ENCODE measurements at regions of chr1 and their contacts with region 1.

Region 1: DNA sequence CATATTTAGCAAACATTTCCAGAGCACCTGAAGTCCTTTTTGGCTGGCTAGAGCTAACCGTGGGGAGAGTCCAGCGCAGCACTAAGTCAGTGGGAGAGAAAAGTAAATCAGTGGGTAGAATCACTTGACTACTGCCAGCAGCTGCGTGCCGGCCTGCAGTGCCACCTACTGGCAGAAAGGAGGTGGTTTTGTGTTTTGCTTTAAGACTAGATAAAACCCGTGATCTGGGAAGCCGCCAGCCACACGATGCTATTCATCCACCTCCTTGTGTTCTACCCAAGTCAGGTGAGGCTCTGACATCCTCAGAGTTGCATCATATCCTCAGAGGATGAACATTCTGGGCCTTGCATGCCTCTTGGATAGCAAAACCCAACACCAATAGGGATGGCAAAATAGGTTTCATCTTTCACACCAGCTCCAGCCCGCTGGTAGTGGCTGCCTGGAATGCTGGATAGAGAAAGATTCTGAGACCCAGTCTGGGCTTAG is 14.1 kb upstream of the HEYL start:
- DNase-seq: peak; percentile 44
- ATAC-seq: peak; percentile 74
- H3K4me3 ChIP-seq: no peak overlapping the region
- H3K27ac ChIP-seq: no peak overlapping the region
- H3K4me1 ChIP-seq: no peaks in the 10 kb centered on the region
- H3K27me3 ChIP-seq: peaks cover 3 to 40% of the 10 kb centered on the region in 2 experiments; a peak in 4 of 5 replicates
- CTCF ChIP-seq: peak; percentile 88
- EP300 ChIP-seq: no peak
- POLR2A ChIP-seq: no peak
- RAD21 ChIP-seq: peak; percentile 60

Region 2: DNA sequence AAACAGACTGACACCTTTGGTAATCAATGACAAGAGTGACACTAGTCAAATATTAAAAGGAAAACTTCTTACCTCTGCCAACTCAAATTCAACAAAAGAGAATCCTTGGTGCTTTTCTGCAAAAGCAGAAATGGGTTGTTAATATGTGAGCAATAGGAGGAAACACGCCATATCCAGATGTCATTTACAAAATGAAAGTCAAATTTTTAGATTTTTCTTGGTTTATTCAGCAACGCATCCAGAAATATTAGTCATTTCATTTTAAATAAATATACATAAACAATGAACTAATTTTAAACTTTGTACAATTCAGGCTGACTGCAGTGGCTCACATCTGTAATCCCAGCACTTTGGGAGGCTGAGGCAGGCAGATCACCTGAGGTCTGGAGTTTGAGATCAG is 99.3 kb before region 1 on chr1:
- CTCF ChIA-PET with region 1: no interaction called
- POLR2A ChIA-PET with region 1: no interaction called
- in situ Hi-C with region 1: no loop called
- intact Hi-C with region 1: no loop called
- DNase-seq: no peak
- ATAC-seq: no peak
- H3K4me3 ChIP-seq: no peak overlapping the region
- H3K27ac ChIP-seq: no peak overlapping the region
- H3K4me1 ChIP-seq: peaks cover 8% of the 10 kb centered on the region
- H3K27me3 ChIP-seq: no peaks in the 10 kb centered on the region
- CTCF ChIP-seq: no peak
- EP300 ChIP-seq: no peak
- POLR2A ChIP-seq: no peak
- RAD21 ChIP-seq: no peak

Region 3: GRCh38 chr1:39609618-39610331 is 43.8 kb before region 1 on chr1:
- CTCF ChIA-PET with region 1: interaction called, 24 read pairs
- POLR2A ChIA-PET with region 1: no interaction called
- in situ Hi-C with region 1: loop called (anchors 5 kb)
- intact Hi-C with region 1: loop called (anchors 1 kb)
- DNase-seq: peak; percentile 66
- ATAC-seq: peak; percentile 98
- H3K4me3 ChIP-seq: peak overlapping the region in 1 of 3 experiments; percentile 25; a peak in 1 of 6 replicates
- H3K27ac ChIP-seq: no peak overlapping the region
- H3K4me1 ChIP-seq: 0 out of 2 replicates have a peak, but pooled peaks cover 11% of the 10 kb centered on the region
- H3K27me3 ChIP-seq: no peaks in the 10 kb centered on the region; a peak in 1 of 5 replicates
- CTCF ChIP-seq: peak; percentile 87
- EP300 ChIP-seq: no peak
- POLR2A ChIP-seq: no peak
- RAD21 ChIP-seq: peak; percentile 48; the same call in 1 of the 2 replicates

Region 4: GRCh38 chr1:40014812-40015594 is 361.4 kb after region 1 on chr1:
- CTCF ChIA-PET with region 1: no interaction called
- POLR2A ChIA-PET with region 1: no interaction called
- in situ Hi-C with region 1: no loop called
- intact Hi-C with region 1: no loop called
- DNase-seq: no peak
- ATAC-seq: no peak
- H3K4me3 ChIP-seq: no peak overlapping the region
- H3K27ac ChIP-seq: no peak overlapping the region
- H3K4me1 ChIP-seq: no peaks in the 10 kb centered on the region
- H3K27me3 ChIP-seq: no peaks in the 10 kb centered on the region
- CTCF ChIP-seq: no peak
- EP300 ChIP-seq: no peak
- POLR2A ChIP-seq: no peak
- RAD21 ChIP-seq: no peak